ENCODE measurements at regions of chr6 and their contacts with region 1.

Region 1: GRCh38 chr6:87393022-87393622 is 14.7 kb upstream of the CFAP206 start:
- DNase-seq: no peak
- H3K4me3 ChIP-seq: no peak overlapping the region
- H3K27ac ChIP-seq: no peak overlapping the region
- H3K4me1 ChIP-seq: no peaks in the 10 kb centered on the region
- H3K27me3 ChIP-seq: no peaks in the 10 kb centered on the region
- CTCF ChIP-seq: peak; percentile 41 to 70 (median 62)
- EP300 ChIP-seq: no peak
- POLR2A ChIP-seq: no peak

Region 2: GRCh38 chr6:87182321-87182720 is 210.8 kb before region 1 on chr6:
- intact Hi-C with region 1: no loop called
- DNase-seq: no peak
- H3K4me3 ChIP-seq: no peak overlapping the region
- H3K27ac ChIP-seq: no peak overlapping the region
- H3K4me1 ChIP-seq: peaks cover 0 to 13% (median 10%) of the 10 kb centered on the region in 4 donors
- H3K27me3 ChIP-seq: no peaks in the 10 kb centered on the region
- CTCF ChIP-seq: no peak
- EP300 ChIP-seq: no peak
- POLR2A ChIP-seq: no peak

Region 3: GRCh38 chr6:87322304-87323212 is 70.6 kb before region 1 on chr6 and contains the start of gene SMIM8:
- intact Hi-C with region 1: no loop called
- DNase-seq: peak; percentile 88
- H3K4me3 ChIP-seq: peak within 1 kb of the TSS; percentile 51 to 92 (median 78)
- H3K27ac ChIP-seq: peak within 1 kb of the TSS; percentile 34 to 81 (median 78)
- H3K4me1 ChIP-seq: peaks cover 0 to 12% (median 7%) of the 10 kb centered on the region in 4 donors
- H3K27me3 ChIP-seq: no peaks in the 10 kb centered on the region
- CTCF ChIP-seq: peak; percentile 74 to 100 (median 86)
- EP300 ChIP-seq: no peak
- POLR2A ChIP-seq: peak in 1 of 2 donors; percentile 19
- total RNA-seq, gene SMIM8: 6.1 to 16.8 (median 12.0) TPM

Region 4: GRCh38 chr6:87589693-87590549 is 196.8 kb after region 1 on chr6 and contains the starts of genes ORC3 and RARS2:
- intact Hi-C with region 1: loop called (anchors 10 kb)
- DNase-seq: peak; percentile 98
- H3K4me3 ChIP-seq: peak within 1 kb of the TSS; percentile 81 to 89 (median 84)
- H3K27ac ChIP-seq: peak within 1 kb of the TSS; percentile 81 to 88 (median 87)
- H3K4me1 ChIP-seq: peaks cover 0 to 50% (median 28%) of the 10 kb centered on the region in 4 donors
- H3K27me3 ChIP-seq: no peaks in the 10 kb centered on the region
- CTCF ChIP-seq: no peak
- EP300 ChIP-seq: no peak
- POLR2A ChIP-seq: peak; percentile 90 to 92
- total RNA-seq, gene ORC3: 17.5 to 27.6 (median 23.7) TPM
- total RNA-seq, gene RARS2: 20.5 to 26.5 (median 20.6) TPM

Region 5: DNA sequence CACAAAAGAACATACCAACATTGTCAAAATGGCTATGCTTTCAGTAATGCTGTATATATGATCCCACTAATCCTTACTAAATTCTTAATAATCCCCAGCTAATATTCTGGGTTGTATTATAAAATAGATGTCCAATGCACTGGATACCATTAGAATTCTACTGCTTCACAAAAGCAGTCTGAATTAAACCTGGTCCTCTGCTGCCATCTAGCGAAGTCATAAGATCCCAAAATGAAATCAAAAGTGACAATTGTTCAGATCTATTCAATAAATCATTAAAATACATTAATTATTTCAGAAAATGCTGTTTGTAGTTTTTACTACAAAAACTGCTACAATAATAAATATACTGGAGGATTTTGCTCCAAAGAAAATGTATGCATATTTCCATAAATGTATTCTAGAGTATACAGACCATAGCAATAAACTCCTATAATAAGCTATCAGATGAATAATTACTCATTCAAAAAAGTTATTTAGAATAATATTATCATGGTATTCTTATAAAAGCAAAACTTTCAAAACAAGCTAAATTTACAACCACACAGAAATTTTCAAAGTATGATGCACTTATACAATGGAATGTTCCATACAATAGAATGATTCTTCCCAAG is 1477.7 kb after region 1 on chr6:
- intact Hi-C with region 1: loop called (anchors 10 kb)
- DNase-seq: no peak
- H3K4me3 ChIP-seq: no peak overlapping the region
- H3K27ac ChIP-seq: no peak overlapping the region
- H3K4me1 ChIP-seq: peaks cover 0 to 3% (median 1%) of the 10 kb centered on the region in 4 donors
- H3K27me3 ChIP-seq: no peaks in the 10 kb centered on the region
- CTCF ChIP-seq: peak in 3 of 4 experiments; percentile 48 to 60 (median 54)
- EP300 ChIP-seq: no peak
- POLR2A ChIP-seq: no peak